Transverse colon (tissue), 4 donors: ENCODE measurements at regions of chr1 and their contacts with region 1.

Region 1: DNA sequence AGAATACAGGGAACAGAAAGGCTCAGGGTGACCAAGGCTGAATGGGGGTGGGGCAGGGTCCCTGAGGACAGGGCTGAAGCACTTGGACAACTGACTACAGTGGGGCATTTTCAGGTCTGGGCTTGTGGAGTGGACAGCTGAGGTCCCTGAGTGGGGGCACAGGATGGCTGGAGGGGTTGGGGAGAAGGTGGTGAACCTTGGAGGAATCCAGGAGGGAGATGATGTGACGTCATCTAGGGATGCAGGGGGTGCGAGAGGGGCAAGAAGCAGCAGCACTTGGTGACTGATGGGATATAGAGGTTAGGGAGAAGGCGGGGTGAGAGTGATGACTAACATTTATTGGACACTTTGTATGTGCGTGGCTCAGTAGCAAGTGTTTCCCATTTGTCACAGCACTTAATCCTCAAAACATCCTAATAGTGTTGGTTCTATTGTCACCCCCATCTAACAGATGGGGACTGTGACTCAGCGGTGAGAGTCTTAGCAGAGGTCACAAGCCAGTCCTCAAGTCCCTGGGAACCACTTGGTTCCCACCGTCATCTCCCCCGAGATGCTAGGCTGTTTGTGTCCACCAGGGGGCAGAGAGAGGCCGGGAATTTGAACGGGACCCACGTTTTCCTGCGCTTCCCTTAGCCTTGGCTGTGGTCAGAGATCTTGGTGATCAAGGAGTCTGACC is 27.9 kb upstream of the BMP8B start:
- DNase-seq: peak; percentile 77
- H3K4me3 ChIP-seq: no peak overlapping the region
- H3K27ac ChIP-seq: peak overlapping the region; percentile 84 to 90 (median 86)
- H3K4me1 ChIP-seq: peaks cover 9 to 29% (median 26%) of the 10 kb centered on the region in 4 donors
- H3K27me3 ChIP-seq: no peaks in the 10 kb centered on the region
- CTCF ChIP-seq: peak; percentile 77 to 99 (median 85)
- EP300 ChIP-seq: no peak
- POLR2A ChIP-seq: no peak

Region 2: DNA sequence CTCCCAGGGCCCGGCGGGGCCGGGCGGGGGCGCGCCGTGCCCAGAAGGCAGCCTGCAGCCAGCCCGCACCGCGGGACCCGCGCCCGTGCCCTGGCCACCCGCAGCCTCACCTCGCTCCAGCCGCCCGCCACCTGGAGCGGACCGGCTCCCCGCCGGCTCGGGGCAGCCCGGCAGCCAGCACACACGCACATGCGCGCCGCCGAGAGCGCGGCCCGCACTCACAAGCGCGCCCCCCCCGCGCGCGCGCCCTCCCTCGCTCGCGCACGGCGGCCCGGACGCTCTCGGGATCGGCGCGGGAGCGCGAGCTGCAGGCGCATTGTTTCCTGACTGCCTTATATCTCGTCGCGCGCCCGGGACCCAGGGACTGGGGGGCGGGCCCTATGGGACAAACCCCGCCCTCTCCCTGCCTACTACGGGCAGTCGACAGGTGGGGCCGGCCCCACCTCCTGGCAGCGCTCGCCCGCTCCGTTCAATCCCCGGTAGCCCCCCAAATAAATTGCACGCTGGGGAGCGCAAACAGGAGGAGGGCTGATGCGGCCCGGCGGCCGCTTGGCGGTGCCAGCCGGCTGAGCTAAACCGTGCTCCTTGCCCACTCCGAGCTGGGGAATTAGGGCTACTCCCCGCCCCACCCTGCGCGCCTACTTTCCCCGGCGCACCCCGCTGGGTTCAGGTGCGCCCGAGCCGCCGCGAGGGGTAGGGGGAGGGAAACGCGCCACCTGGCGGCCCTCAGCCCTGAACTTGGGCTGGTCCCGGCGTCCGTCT is 85.3 kb after region 1 on chr1 and contains the start of gene MYCL:
- in situ Hi-C with region 1: loop called in 3 of 4 experiments (anchors 5 kb)
- intact Hi-C with region 1: loop called (anchors 5 kb)
- DNase-seq: peak; percentile 92
- H3K4me3 ChIP-seq: peak within 1 kb of the TSS; percentile 46 to 73 (median 68)
- H3K27ac ChIP-seq: peak within 1 kb of the TSS; percentile 68 to 87 (median 84)
- H3K4me1 ChIP-seq: peaks cover 4 to 34% (median 21%) of the 10 kb centered on the region in 4 donors
- H3K27me3 ChIP-seq: peaks cover 53% of the 10 kb centered on the region
- CTCF ChIP-seq: peak; percentile 69 to 92 (median 77)
- EP300 ChIP-seq: no peak
- POLR2A ChIP-seq: peak; percentile 69
- total RNA-seq, gene MYCL: 14.2 to 27.3 (median 15.8) TPM

Region 3: DNA sequence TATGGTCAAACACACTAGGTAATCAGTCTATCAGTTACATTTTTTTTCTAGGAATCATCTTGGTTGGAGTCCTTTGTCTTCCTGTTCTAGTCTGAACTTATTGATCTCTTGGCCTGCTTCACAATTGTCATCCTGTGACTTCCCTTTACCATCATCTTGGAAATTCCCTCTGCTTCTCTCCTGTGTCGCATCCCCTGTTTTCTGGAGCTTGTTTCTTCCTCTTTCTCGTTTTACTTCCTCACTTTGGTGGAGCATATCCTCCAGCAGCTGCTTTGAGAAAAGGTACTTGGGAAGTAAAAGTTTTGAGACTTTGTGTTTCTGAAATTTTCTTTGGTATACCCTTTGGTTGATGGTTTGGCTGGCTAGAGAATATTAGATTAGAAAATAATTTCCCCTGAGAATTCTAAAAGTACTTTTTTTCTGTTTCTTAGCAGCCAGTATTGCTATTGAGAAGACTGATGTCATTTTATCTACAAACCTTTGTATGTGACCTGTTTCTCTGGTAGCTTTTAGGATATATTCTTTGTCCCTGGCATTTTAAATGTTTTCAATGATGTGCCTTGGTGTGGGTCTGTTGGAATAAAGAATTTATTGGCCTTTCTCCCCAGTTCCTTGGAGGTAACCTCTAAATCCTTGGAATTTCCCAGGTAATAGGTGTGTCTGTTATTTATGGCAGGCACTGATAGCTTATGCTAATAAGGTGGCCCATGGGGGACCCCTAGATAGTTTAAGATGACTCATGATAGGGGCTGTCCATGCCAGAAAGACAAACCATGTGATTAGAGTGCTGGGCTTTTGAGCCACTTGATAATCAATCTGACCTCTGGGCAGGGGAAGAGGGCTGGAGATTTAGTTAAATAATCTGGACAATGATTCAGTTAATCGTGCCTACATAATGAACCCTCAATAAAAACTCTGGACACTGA is 91.2 kb after region 1 on chr1:
- in situ Hi-C with region 1: loop called in 2 of 4 experiments (anchors 5 kb)
- intact Hi-C with region 1: loop called (anchors 5 kb)
- DNase-seq: no peak
- H3K4me3 ChIP-seq: no peak overlapping the region
- H3K27ac ChIP-seq: no peak overlapping the region
- H3K4me1 ChIP-seq: no peaks in the 10 kb centered on the region
- H3K27me3 ChIP-seq: peaks cover 13% of the 10 kb centered on the region
- CTCF ChIP-seq: no peak
- EP300 ChIP-seq: no peak
- POLR2A ChIP-seq: no peak